Gastrocnemius medialis (tissue), 4 donors: ENCODE measurements at regions of chr2 and their contacts with region 1.

Region 1: GRCh38 chr2:10122386-10123280 is at the start of gene RRM2:
- DNase-seq: peak; percentile 89 to 90
- ATAC-seq: peak; percentile 84 to 88
- H3K4me3 ChIP-seq: peak within 1 kb of the TSS; percentile 34 to 72 (median 60)
- H3K27ac ChIP-seq: no peak within 1 kb of the TSS
- H3K4me1 ChIP-seq: peaks cover 15 to 19% of the 10 kb centered on the region in 2 donors
- H3K27me3 ChIP-seq: peaks cover 12 to 14% (median 14%) of the 10 kb centered on the region in 3 donors
- CTCF ChIP-seq: no peak
- POLR2A ChIP-seq: no peak
- total RNA-seq, gene RRM2: 2.0 TPM in 1 of 4 donors, not detected in the others

Region 2: GRCh38 chr2:9663008-9663879 is 459.4 kb before region 1 on chr2:
- in situ Hi-C with region 1: no loop called
- intact Hi-C with region 1: no loop called
- DNase-seq: no peak
- ATAC-seq: no peak
- H3K4me3 ChIP-seq: no peak overlapping the region
- H3K27ac ChIP-seq: no peak overlapping the region
- H3K4me1 ChIP-seq: peaks cover 0 to 6% of the 10 kb centered on the region in 2 donors
- H3K27me3 ChIP-seq: no peaks in the 10 kb centered on the region
- CTCF ChIP-seq: no peak
- POLR2A ChIP-seq: no peak

Region 3: GRCh38 chr2:10072656-10073480 is 49.8 kb before region 1 on chr2:
- in situ Hi-C with region 1: no loop called
- intact Hi-C with region 1: loop called (anchors 2 kb)
- DNase-seq: peak; percentile 63 to 74
- ATAC-seq: peak; percentile 93 to 98
- H3K4me3 ChIP-seq: no peak overlapping the region
- H3K27ac ChIP-seq: no peak overlapping the region
- H3K4me1 ChIP-seq: peaks cover 0 to 5% of the 10 kb centered on the region in 2 donors
- H3K27me3 ChIP-seq: peaks cover 15 to 17% (median 16%) of the 10 kb centered on the region in 3 donors
- CTCF ChIP-seq: peak; percentile 67 to 91 (median 82)
- POLR2A ChIP-seq: no peak

Region 4: GRCh38 chr2:10355471-10356458 is 233.1 kb after region 1 on chr2:
- in situ Hi-C with region 1: no loop called
- intact Hi-C with region 1: no loop called
- DNase-seq: no peak
- ATAC-seq: no peak
- H3K4me3 ChIP-seq: no peak overlapping the region
- H3K27ac ChIP-seq: no peak overlapping the region
- H3K4me1 ChIP-seq: no peaks in the 10 kb centered on the region
- H3K27me3 ChIP-seq: no peaks in the 10 kb centered on the region
- CTCF ChIP-seq: no peak
- POLR2A ChIP-seq: no peak

Region 5: DNA sequence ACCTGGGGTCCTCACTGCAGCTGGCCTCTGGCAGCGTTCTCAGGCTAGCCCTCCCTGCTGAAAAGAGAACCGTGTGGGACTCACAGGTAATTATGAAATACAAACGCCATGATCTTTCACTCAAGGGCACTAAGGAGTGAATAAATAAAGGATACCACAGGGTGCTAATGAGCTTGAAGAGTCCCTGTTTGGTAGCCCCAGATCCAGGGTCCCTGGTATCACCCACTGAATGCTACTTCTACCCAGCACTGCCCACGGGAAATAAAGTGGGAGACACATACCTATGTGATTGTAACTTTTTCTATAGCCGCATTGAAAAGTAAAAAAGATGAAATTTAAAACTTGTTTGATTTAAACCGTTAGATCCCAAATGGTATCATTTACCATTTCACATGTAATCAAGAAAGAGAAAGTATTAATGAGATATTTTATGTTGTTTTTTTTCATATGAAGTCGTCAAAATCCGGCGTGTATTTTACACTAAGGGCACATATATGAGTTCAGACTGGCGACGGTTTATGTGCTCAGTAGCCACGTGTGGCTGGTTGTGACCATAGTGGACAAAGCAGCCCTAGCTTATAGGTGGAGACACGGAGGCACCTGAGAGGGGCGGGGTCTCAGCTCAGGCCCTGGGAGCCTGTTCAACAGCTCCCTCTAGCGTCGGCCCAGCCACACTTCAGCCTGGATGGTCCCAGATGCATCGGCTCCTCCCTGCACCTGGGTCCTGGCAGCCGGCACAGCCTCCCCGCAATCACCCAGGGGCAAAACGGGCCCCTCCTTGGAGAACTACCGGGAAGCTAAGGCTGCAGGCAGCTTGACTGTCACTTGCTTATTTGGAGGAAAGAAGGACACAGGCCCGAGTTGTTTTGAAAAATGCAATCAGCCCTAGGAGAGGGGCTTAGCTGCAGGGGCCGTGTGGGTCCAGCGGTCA is 286.3 kb after region 1 on chr2:
- in situ Hi-C with region 1: loop called in 2 of 4 experiments (anchors 10 kb)
- intact Hi-C with region 1: loop called (anchors 1 kb)
- DNase-seq: peak; percentile 65 to 77
- ATAC-seq: peak; percentile 28 to 42
- H3K4me3 ChIP-seq: no peak overlapping the region
- H3K27ac ChIP-seq: peak overlapping the region; percentile 62 to 82 (median 73)
- H3K4me1 ChIP-seq: peaks cover 52 to 54% of the 10 kb centered on the region in 2 donors
- H3K27me3 ChIP-seq: no peaks in the 10 kb centered on the region
- CTCF ChIP-seq: peak; percentile 88 to 97 (median 94)
- POLR2A ChIP-seq: no peak

Region 6: GRCh38 chr2:10659898-10660568 is 537.4 kb after region 1 on chr2:
- in situ Hi-C with region 1: loop called (anchors 25 kb)
- intact Hi-C with region 1: no loop called
- DNase-seq: peak; percentile 14 to 38
- ATAC-seq: peak; percentile 81 to 90
- H3K4me3 ChIP-seq: no peak overlapping the region
- H3K27ac ChIP-seq: no peak overlapping the region
- H3K4me1 ChIP-seq: no peaks in the 10 kb centered on the region
- H3K27me3 ChIP-seq: no peaks in the 10 kb centered on the region
- CTCF ChIP-seq: peak; percentile 15 to 71 (median 64)
- POLR2A ChIP-seq: no peak